BJ (cell line): ENCODE measurements at regions of chr6 and their contacts with region 1.

Region 1: DNA sequence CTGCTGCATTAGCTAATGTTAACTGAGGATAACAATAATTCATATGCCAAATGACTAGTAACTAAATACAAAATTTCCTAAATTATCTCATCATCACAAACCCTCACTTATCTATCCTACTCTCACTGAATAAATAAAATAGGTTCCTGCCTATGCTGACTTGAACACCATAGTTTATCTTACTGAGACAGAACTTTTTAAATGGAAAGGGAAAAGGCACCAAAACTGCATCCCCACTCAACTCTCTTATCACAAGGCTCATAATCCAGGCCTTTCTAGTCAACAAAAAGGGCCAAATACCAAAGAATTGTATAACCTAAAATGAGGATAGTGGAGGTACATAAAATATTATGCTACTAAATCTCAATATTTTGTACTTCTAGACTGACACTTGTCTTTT is 23.1 kb downstream of the OSTM1 start:
- DNase-seq: no peak
- H3K4me3 ChIP-seq: no peak overlapping the region
- H3K27me3 ChIP-seq: no peaks in the 10 kb centered on the region
- CTCF ChIP-seq: no peak

Region 2: GRCh38 chr6:107977283-107977682 is 74.2 kb before region 1 on chr6:
- CTCF ChIA-PET with region 1: interaction called, 52 read pairs
- POLR2A ChIA-PET with region 1: no interaction called
- DNase-seq: no peak
- H3K4me3 ChIP-seq: no peak overlapping the region
- H3K27me3 ChIP-seq: no peaks in the 10 kb centered on the region
- CTCF ChIP-seq: peak; percentile 44

Region 3: GRCh38 chr6:108105571-108105970 is 54.1 kb after region 1 on chr6:
- CTCF ChIA-PET with region 1: no interaction called
- POLR2A ChIA-PET with region 1: no interaction called
- DNase-seq: no peak
- H3K4me3 ChIP-seq: no peak overlapping the region
- H3K27me3 ChIP-seq: peaks cover 7% of the 10 kb centered on the region
- CTCF ChIP-seq: no peak

Region 4: DNA sequence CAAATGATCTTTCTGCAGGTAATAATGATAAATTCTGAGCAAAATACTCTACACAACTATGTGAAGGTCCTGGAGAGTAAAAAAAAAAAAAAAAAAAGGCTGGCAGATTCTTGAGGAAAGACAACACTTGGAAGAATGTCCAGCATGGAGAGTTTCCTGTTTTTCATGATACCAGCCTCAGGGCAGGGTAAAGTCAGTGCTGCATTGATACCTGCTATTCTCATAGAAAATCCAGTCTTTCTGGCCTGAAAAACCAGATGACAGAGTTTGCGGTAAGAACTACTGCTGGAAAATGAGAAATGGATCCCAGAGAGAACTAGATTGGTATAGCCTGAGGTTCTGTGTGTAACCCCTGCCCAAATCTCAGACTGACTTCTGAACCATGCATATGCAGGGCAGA is 332.5 kb after region 1 on chr6:
- CTCF ChIA-PET with region 1: no interaction called
- POLR2A ChIA-PET with region 1: no interaction called
- DNase-seq: no peak
- H3K4me3 ChIP-seq: no peak overlapping the region
- H3K27me3 ChIP-seq: no peaks in the 10 kb centered on the region
- CTCF ChIP-seq: no peak